ENCODE measurements at regions of chr5 and their contacts with region 1.

Region 1: GRCh38 chr5:132386644-132387286 is 17.3 kb downstream of the SLC22A5 start:
- ATAC-seq: peak; percentile 17 to 61 (median 34)
- H3K4me3 ChIP-seq: no peak overlapping the region
- H3K27ac ChIP-seq: no peak overlapping the region
- H3K4me1 ChIP-seq: peaks cover 0 to 10% of the 10 kb centered on the region in 2 donors

Region 2: DNA sequence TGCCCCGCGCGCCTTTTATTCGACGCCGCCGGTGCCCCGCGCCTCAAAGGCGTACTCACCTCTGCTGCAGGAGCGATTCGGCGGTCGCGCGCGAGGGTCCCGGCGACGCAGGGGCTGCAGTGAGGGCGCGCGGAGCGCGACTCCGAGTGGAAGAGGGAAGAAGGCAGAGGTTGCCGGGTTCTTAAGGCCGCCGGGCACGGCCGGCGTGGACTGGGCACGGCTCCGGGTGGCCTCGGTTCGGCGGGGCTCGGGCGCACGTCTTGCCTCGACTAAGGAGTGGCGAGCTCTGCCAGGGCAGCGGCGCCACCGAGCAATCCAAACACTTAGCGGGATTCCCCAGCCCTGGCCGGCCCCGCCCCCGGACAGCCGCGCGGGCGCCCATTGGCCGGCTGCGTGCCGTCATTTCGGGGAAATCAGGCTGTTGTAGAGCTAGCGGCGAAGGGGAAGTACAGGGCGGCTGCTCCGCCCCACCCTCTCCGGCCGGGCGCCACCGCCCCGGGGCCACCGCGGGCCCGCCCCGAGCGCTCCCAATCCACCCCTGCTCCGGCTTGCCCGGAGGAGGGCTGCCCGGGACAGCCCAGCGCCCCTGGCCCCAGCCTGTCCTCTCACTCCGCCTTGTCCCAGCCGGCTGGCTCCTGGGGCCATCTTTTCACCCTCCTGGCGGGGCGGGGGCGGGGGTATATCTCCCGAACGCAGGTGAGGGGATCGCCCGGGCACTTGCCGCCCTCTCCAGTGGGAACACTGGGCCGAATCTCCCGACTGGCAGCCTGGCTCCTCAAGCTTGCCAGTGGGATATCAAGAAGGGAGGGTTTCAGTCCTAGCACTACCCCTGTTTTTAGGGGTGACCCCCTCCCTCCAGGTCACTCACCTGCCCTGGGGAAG is 104.0 kb after region 1 on chr5 and contains the start of gene IRF1:
- in situ Hi-C with region 1: loop called in 1 of 9 experiments (anchors 25 kb)
- ATAC-seq: peak; percentile 59 to 90 (median 89)
- H3K4me3 ChIP-seq: peak within 1 kb of the TSS; percentile 43 to 84 (median 64)
- H3K27ac ChIP-seq: peak within 1 kb of the TSS in 1 of 2 donors; percentile 18
- H3K4me1 ChIP-seq: peaks cover 0 to 13% of the 10 kb centered on the region in 2 donors
- total RNA-seq, gene IRF1: 1.4 to 29.2 (median 9.0) TPM

Region 3: GRCh38 chr5:132500931-132501630 is 114.3 kb after region 1 on chr5:
- in situ Hi-C with region 1: loop called in 2 of 9 experiments (anchors 10 to 25 kb)
- ATAC-seq: peak in 6 of 8 experiments; percentile 16 to 41 (median 25)
- H3K4me3 ChIP-seq: no peak overlapping the region
- H3K27ac ChIP-seq: no peak overlapping the region
- H3K4me1 ChIP-seq: peaks cover 0 to 5% of the 10 kb centered on the region in 2 donors

Region 4: DNA sequence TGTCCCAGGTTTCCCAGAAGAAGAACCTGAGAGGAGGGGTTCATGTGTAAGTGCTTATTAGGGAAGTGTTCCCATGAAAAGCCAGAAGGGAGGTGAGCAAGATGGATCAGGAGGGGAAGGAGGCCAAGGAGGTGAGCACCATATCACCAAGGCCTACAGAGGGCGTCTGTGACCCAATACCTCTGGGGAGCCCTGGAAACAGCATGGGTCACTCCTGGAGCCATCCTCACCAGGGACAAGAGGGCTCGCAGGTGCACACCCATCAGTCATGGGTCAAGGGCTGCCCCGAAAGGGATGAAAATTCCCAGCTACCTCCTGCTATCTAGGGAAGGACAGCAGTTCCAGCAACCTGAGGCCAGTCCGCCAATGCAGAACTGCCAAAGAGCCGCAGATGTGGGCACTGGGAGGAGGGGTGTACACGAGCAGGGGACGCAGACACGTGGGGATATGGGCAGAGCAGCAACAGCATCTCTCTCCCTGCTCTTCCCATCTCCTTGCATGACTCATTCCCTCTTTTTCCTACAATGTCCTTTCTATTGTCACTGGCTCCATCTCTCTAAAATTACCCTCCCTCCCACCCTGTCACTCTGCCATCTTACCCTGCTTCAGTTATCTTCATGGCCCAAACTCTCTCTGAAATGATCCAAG is 1393.2 kb after region 1 on chr5:
- in situ Hi-C with region 1: no loop called
- ATAC-seq: peak in 2 of 8 experiments; percentile 13 to 22
- H3K4me3 ChIP-seq: no peak overlapping the region
- H3K27ac ChIP-seq: no peak overlapping the region
- H3K4me1 ChIP-seq: peaks cover 7 to 10% of the 10 kb centered on the region in 2 donors

Measured in motor neuron (in vitro differentiated cells).